Aorta (tissue), 5 donors: ENCODE measurements at regions of chr3 and their contacts with region 1.

Region 1: DNA sequence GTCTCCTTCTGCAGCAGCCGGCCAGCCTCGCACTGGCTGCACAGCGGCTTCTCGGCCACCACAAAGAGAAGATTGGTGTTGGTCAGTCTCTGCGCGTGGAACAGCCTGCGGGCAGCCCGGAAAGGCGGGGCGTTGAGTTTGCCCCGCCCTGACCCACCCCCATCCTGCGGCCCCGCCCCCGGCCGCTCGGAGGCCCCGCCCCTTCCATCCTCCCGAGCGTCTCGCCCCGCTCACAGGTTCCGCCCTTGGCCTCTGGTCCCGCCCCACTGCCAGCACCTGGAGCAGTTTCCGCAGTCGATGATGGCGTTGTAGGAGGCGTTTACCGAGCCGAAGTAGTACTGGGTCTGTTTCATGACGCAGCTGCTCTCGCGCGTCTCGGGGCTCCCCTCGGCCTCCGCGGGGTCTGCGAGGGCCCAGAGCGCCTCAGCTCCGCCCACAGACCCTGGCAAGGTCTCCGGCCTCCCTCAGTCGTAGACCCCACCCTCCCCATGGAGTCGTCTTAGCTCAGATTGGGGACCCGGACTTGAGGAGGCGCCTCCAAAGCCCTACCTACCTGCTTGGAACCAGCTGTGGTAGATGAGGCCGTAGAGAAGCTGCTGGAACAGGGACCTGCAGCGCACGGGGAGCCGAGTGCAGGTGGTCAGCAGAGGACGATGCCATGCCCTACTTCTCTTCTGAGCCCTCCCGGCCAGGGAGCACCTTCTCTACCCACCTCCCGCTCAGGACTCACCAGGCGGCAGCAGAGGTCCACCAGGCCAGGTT is 5.9 kb upstream of the TMEM115 start:
- DNase-seq: peak; percentile 89 to 93
- ATAC-seq: peak; percentile 88
- H3K4me3 ChIP-seq: peak overlapping the region; percentile 5 to 30
- H3K27ac ChIP-seq: no peak overlapping the region
- H3K4me1 ChIP-seq: no peaks in the 10 kb centered on the region
- H3K27me3 ChIP-seq: no peaks in the 10 kb centered on the region

Region 2: GRCh38 chr3:50519471-50520089 is 154.3 kb after region 1 on chr3:
- intact Hi-C with region 1: loop called in 1 of 2 experiments (anchors 5 kb)
- DNase-seq: peak; percentile 65 to 85
- ATAC-seq: peak; percentile 63
- H3K4me3 ChIP-seq: no peak overlapping the region
- H3K27ac ChIP-seq: no peak overlapping the region
- H3K4me1 ChIP-seq: no peaks in the 10 kb centered on the region
- H3K27me3 ChIP-seq: no peaks in the 10 kb centered on the region